Activated CD4-positive, alpha-beta T cell treated with anti-CD3 and anti-CD28 coated beads, Interleukin-2, amount 10 ng/mL, durations not matched to agents 24 days and 14 days (primary cell): ENCODE measurements at regions of chr4 and their contacts with region 1.

Region 1: DNA sequence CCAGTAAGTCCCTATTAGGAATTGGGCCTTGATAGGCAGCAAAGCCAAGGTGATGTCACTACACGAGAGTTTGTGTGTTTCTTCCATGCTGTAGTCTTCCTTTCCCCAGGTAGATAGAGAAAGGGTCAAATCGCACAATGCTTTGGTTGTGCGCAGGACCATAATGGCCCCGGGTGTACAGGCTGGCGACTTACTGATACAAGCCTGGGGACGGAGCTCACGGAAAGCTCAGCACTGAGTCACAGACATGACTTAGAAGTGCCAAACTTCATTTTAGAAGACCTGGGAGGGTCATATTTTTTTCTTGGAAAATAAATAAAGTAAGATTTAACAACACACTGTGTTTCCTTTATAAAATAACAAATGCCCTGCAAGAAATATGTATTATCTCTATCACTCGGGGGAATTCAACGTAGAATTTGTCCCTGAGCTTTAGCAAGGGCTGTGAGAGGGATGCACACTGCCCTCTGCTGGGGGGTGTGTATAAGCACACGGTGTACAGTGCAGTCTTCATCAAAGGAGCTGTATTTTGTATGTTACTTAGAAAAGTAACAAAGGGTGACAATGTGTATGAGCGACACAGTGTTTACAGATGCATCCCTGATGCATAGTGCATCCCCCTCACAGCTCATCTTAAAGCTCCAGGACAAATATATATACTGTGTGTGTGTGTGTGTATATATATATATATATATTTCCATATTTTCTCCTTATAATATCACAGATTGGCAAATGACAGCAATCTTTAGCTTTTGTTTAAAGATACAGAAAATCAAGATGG is 254.5 kb upstream of the VEGFC start:
- DNase-seq: peak; percentile 86
- H3K4me3 Mint-ChIP-seq: no peak overlapping the region
- H3K27ac Mint-ChIP-seq: no peak overlapping the region
- H3K4me1 Mint-ChIP-seq: no peaks in the 10 kb centered on the region
- H3K27me3 Mint-ChIP-seq: peaks cover 6% of the 10 kb centered on the region

Region 2: GRCh38 chr4:176377780-176378179 is 669.5 kb before region 1 on chr4:
- intact Hi-C with region 1: loop called (anchors 1 kb)
- DNase-seq: no peak
- H3K4me3 Mint-ChIP-seq: no peak overlapping the region
- H3K27ac Mint-ChIP-seq: no peak overlapping the region
- H3K4me1 Mint-ChIP-seq: no peaks in the 10 kb centered on the region
- H3K27me3 Mint-ChIP-seq: peaks cover 19% of the 10 kb centered on the region

Region 3: DNA sequence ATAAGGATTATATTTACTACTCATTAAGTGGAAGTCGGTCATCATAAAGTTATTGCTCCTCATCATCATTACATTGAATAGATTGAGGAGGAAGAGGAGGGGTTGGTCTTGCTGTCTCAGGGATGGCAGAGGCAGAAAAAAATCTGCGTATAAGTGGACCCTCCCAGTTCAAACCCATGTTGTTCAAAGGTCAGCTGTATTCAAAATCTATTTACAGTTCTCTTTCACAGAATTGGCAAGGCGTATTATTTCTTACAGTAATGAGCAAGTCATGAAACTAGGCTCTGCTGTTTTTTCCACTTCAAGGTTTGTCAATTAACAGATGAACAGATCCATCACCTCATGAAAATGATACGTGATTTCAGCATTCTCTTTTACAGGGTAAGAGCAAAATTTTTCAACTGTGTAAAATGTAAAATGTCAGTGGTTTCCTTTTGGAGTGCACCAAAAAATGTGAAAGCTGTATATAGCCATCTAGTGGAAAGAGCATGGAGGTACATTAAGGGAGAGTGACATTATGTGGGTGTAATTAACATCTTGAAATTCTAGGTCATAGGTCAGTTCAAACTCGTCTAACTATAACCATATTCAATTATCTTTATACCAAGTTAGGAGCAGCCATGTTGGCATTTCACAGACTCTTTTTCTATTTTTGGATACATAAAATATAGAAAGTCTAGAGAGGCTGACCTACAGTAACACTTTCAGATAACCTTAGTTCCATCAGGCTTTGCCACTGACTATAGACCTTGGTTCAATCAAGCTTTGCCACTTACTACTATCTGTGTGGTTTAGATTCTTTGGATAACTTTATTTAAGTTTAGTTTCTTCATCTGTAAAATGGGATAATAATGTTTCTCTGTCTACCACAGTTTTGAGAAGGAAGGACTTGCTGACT is 292.5 kb after region 1 on chr4:
- intact Hi-C with region 1: loop called (anchors 1 kb)
- DNase-seq: peak; percentile 62
- H3K4me3 Mint-ChIP-seq: no peak overlapping the region
- H3K27ac Mint-ChIP-seq: peak overlapping the region; percentile 67
- H3K4me1 Mint-ChIP-seq: peaks cover 16% of the 10 kb centered on the region
- H3K27me3 Mint-ChIP-seq: no peaks in the 10 kb centered on the region